Activated CD4-positive, alpha-beta T cell treated with anti-CD3 and anti-CD28 coated beads, Interleukin-2, amount 10 ng/mL, durations not matched to agents 24 days and 14 days (primary cell): ENCODE measurements at regions of chr7 and their contacts with region 1.

Region 1: DNA sequence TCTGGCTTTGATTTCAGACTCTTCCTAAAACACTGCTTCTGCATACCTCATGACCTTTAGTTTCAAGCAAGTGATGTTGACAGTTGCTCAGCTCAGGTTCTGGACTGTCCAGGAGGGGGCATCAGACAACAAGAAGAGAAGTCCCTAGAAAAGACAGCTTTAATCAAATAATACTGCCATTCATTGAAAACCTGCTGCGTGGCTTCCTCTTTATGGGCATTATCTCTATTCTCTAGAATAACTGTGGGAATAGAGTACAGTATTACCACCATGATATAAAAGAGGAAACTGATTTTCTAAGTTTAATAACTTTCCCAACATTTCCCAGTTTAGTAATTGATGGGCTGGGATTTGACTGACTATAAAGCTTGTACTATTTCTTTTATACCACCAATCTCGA is 170.4 kb downstream of the SNX13 start:
- DNase-seq: peak; percentile 87
- H3K4me3 Mint-ChIP-seq: no peak overlapping the region
- H3K27ac Mint-ChIP-seq: no peak overlapping the region
- H3K4me1 Mint-ChIP-seq: peaks cover 5% of the 10 kb centered on the region
- H3K27me3 Mint-ChIP-seq: no peaks in the 10 kb centered on the region

Region 2: DNA sequence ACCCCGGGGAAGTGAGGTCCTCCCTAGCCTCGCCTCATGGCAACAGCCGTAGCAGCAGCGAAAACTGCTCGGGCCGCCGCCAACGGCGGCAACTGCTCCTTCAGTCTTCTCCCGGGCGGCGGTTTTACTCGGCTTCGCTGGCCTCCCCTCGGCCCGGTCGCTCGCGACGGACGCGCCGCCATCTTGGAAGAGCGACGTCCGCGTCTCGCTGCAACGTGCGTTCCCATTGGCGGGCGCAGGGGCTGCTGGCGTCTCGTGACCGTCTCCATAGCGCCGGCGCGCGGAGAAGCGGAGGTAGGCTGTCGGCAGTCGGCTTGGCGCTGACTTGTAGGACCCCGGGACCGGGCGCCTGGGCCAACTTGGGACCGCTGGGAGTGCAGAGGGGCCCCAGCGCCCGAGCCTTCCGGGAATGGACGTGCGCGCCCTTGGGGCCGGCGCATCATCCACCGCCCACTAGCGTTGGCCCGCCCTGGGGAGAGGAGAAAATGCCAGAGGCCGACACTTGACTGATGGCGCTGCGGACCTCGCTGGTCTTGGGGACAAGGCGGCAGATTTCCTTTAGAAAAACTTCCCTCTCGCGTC is 170.5 kb after region 1 on chr7 and contains the start of gene SNX13:
- intact Hi-C with region 1: loop called (anchors 5 kb)
- DNase-seq: peak; percentile 96
- H3K4me3 Mint-ChIP-seq: peak within 1 kb of the TSS; percentile 99
- H3K27ac Mint-ChIP-seq: peak within 1 kb of the TSS; percentile 93
- H3K4me1 Mint-ChIP-seq: peaks cover 32% of the 10 kb centered on the region
- H3K27me3 Mint-ChIP-seq: peaks cover 17% of the 10 kb centered on the region
- total RNA-seq, gene SNX13: 18.1 and 23.7 TPM in 2 replicates

Region 3: DNA sequence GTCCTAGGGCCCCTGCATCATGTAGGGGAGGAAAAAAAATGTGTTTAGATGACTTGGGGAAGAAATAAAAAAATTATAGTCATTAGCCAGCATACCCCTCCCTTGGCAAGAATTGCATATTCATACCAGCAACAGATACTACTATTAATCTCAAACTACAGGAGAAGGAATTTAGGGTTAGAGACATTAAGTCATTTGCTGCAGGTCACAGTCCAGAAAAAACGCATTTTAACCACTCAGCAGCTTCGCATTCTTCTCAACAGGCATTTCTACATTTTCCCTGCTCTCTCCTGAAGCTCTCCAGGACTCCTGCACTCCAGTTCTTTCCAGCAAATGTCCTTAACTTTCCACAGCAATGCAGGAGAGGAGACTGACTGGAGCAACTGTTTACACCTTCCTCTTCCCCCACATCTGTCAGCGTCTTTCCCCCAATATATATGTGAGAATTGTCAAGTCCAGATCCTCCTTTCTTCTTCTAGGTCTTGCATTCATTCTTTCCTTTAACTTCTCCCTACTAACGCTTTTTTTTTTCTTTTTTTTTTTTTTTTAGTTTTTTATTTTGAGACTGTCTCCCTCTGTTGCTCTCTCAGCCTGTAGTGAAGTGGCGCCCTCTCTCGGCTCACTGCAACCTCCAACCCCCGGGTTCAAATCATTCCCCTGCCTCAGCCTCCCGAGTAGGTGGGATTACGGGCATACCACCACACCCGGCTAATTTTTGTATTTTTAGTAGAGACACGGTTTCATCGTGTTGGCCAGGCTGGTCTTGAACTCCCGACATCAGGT is 222.1 kb after region 1 on chr7:
- intact Hi-C with region 1: loop called (anchors 1 kb)
- DNase-seq: peak; percentile 66
- H3K4me3 Mint-ChIP-seq: no peak overlapping the region
- H3K27ac Mint-ChIP-seq: no peak overlapping the region
- H3K4me1 Mint-ChIP-seq: no peaks in the 10 kb centered on the region
- H3K27me3 Mint-ChIP-seq: peaks cover 8% of the 10 kb centered on the region

Region 4: GRCh38 chr7:18320971-18321567 is 551.2 kb after region 1 on chr7:
- intact Hi-C with region 1: loop called (anchors 1 kb)
- DNase-seq: no peak
- H3K4me3 Mint-ChIP-seq: no peak overlapping the region
- H3K27ac Mint-ChIP-seq: no peak overlapping the region
- H3K4me1 Mint-ChIP-seq: no peaks in the 10 kb centered on the region
- H3K27me3 Mint-ChIP-seq: no peaks in the 10 kb centered on the region

Region 5: DNA sequence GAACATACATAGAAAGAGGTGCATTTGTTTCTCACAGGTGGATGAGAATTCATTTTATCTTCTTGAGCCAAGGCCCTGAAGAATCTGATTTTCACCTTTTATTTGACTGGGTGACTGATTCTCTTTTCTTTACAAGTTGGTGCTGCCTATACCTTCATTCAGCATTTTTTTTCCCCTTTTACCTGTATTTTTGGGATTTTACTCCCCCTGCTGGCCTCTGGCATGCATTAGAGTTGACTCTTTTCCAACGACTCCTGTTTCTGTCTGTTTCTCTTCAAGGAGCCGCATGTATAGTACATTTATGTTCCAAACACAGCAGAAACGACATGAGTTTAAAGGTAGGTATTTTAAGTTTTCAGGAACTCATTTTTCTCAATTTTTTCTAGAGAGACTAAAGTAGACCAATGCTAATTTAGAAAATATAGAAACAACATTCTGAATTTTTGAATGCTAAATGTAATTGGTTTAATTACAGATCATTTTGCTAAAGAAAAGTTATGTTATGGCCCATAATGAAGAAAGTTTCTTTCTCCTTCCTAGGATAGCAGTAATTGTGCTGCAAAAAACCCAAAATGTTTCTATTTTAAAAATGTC is 575.8 kb after region 1 on chr7:
- intact Hi-C with region 1: loop called (anchors 2 kb)
- DNase-seq: peak; percentile 71
- H3K4me3 Mint-ChIP-seq: no peak overlapping the region
- H3K27ac Mint-ChIP-seq: no peak overlapping the region
- H3K4me1 Mint-ChIP-seq: no peaks in the 10 kb centered on the region
- H3K27me3 Mint-ChIP-seq: peaks cover 10% of the 10 kb centered on the region

Region 6: GRCh38 chr7:18468795-18469194 is 698.9 kb after region 1 on chr7:
- intact Hi-C with region 1: no loop called
- DNase-seq: no peak
- H3K4me3 Mint-ChIP-seq: no peak overlapping the region
- H3K27ac Mint-ChIP-seq: no peak overlapping the region
- H3K4me1 Mint-ChIP-seq: no peaks in the 10 kb centered on the region
- H3K27me3 Mint-ChIP-seq: no peaks in the 10 kb centered on the region